Activated CD4-positive, alpha-beta memory T cell treated with anti-CD3 and anti-CD28 coated beads for 36 hours (primary cell): ENCODE measurements at regions of chr14 and their contacts with region 1.

Region 1: DNA sequence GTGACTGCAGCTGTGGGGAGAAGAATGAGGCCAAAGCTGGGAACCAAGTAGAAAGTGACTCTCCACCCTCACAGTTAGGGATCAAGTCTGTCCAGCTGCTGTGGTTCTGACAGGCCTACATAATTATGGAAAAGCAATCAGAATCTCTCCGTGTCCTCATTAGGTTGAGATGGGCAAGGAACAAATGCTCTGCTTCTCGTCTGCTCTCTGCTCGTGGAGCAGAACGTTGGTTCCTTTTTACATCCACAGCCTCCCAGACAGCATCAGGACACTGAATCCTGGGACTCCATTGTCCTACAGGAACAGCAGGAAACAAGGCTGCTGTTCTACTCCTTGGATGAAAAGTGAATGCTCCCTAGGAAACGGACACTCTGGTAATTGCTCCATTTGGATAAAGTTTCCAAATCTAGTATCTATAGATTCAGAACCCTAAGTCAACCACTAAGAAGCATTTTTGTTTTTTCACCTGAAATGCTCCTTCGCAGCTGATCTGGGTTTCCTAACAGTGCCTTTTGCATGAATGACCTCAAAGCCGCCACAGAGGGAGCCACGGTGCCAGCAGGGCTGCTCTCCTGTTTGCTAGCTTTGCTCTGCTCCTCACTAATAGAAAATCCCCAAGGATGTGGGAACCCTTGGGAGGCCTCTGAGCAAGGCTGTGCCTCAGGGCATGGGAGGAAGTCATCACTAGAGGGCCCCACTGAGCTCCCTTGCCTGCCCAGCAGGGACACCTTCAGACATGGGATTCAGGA is 102.0 kb downstream of the EGLN3 start:
- DNase-seq: peak; percentile 29
- H3K4me3 Mint-ChIP-seq: no peak overlapping the region
- H3K27ac Mint-ChIP-seq: no peak overlapping the region
- H3K4me1 Mint-ChIP-seq: no peaks in the 10 kb centered on the region
- H3K27me3 Mint-ChIP-seq: no peaks in the 10 kb centered on the region

Region 2: DNA sequence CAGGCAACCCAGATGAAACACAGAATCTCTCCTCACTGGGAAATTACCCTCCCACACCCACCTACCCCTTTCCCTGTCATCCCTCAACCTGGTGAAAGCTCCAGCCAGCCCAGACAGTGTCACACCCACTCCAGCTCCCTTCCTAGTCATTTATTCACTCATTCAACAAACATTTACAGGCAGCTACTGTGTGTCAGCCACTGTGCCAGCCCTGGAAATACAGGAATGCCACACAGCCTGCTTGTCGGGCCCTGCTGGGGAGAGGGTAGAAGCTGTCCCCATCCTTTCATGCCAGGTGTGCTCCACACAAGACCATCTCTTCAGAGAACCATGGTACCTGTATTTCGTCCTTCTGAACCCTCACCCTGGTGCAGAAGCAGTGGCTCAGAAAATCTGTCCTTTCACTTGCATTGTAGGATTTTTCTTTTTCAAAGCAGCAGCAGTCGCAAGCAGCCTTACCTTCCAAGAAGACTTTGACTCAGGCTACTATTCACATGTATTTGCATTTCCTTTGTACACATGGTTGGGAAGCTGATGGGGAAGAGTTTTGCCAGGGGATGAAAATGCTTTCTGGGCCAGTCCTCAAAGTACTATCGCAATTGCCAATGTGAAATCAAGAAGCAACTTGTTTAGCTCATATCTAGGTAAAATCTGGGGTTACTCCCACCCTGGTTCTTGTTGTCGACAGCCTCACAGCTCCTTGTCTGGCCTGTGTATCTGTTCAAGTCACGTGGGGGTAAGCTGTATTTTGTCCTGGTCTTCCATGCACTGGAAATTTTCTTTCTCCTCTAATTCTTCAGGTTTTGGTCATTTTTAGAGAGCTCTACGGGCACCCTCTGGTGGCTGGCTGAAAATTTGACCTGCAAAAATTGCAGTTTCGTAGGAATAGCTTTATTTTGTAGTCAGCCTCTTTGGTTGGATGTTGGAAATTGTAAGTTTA is 249.4 kb after region 1 on chr14:
- CTCF ChIA-PET with region 1: interaction called, 26 read pairs
- POLR2A ChIA-PET with region 1: no interaction called
- intact Hi-C with region 1: no loop called
- DNase-seq: peak; percentile 26
- H3K4me3 Mint-ChIP-seq: no peak overlapping the region
- H3K27ac Mint-ChIP-seq: no peak overlapping the region
- H3K4me1 Mint-ChIP-seq: peaks cover 1% of the 10 kb centered on the region
- H3K27me3 Mint-ChIP-seq: no peaks in the 10 kb centered on the region

Region 3: DNA sequence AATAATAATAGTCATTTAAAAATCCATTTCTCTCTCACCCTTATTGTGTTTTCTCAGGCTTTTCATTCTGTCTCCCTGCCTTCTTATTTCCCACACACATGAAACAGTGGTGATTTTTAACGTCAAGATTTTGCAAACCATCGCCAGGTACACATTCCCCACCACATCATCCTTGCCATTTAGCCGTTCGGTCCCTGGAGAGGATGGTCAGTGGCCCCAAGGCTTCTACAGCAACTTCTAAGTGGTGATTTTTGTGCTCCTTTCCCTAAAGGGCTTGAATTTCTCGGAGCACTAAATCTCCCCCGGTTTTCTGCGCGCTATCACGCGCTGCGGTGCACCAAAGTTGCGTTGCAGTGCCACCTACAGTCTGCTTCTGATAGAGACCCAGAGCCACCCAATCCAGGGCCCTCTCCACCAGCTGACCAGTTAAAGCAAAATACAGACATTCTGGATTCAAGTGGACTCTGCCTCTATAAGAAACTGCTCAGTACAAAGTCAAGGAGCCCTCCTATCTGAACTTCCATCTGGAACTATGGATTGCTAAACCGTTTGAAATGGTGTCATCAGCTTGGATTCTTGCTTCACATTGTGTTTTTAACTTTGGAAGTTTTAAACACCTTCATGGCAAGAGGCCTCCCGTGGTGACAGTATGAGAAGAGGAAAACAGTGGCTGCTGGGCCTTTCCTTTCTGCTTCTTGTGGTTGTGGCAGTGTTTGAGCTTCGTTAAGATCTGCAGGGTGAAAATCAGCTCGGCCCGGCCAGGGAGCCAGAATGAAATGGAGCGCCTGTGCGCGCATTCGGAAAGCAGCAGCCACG is 379.2 kb after region 1 on chr14:
- CTCF ChIA-PET with region 1: interaction called, 32 read pairs
- POLR2A ChIA-PET with region 1: no interaction called
- intact Hi-C with region 1: no loop called
- DNase-seq: peak; percentile 70
- H3K4me3 Mint-ChIP-seq: no peak overlapping the region
- H3K27ac Mint-ChIP-seq: no peak overlapping the region
- H3K4me1 Mint-ChIP-seq: peaks cover 6% of the 10 kb centered on the region
- H3K27me3 Mint-ChIP-seq: peaks cover 6% of the 10 kb centered on the region